Common myeloid progenitor, CD34-positive (primary cell): ENCODE measurements at regions of chr12 and their contacts with region 1.

Region 1: GRCh38 chr12:53065975-53066931 is 12.9 kb downstream of the SPRYD3 start:
- DNase-seq: peak; percentile 52 to 60 (median 53)
- H3K4me3 ChIP-seq: no peak overlapping the region
- H3K27ac ChIP-seq: no peak overlapping the region
- H3K4me1 ChIP-seq: peaks cover 0 to 9% (median 0%) of the 10 kb centered on the region in 4 experiments
- H3K27me3 ChIP-seq: no peaks in the 10 kb centered on the region

Region 2: GRCh38 chr12:53054112-53054833 is 12.0 kb before region 1 on chr12:
- CTCF ChIA-PET with region 1: interaction called, 44 read pairs
- POLR2A ChIA-PET with region 1: no interaction called
- DNase-seq: peak; percentile 91 to 95 (median 94)
- H3K4me3 ChIP-seq: peak overlapping the region; percentile 72 to 93 (median 79)
- H3K27ac ChIP-seq: peak overlapping the region in 1 of 2 experiments; percentile 25
- H3K4me1 ChIP-seq: peaks cover 0 to 18% (median 10%) of the 10 kb centered on the region in 4 experiments
- H3K27me3 ChIP-seq: no peaks in the 10 kb centered on the region

Region 3: GRCh38 chr12:53086361-53086760 is 20.1 kb after region 1 on chr12:
- CTCF ChIA-PET with region 1: interaction called, 361 read pairs
- POLR2A ChIA-PET with region 1: interaction called, 4 read pairs
- DNase-seq: no peak
- H3K4me3 ChIP-seq: no peak overlapping the region
- H3K27ac ChIP-seq: no peak overlapping the region
- H3K4me1 ChIP-seq: no peaks in the 10 kb centered on the region
- H3K27me3 ChIP-seq: no peaks in the 10 kb centered on the region

Region 4: GRCh38 chr12:53159195-53159839 is 93.1 kb after region 1 on chr12:
- CTCF ChIA-PET with region 1: interaction called, 20 read pairs
- POLR2A ChIA-PET with region 1: no interaction called
- DNase-seq: peak; percentile 81 to 90 (median 85)
- H3K4me3 ChIP-seq: no peak overlapping the region
- H3K27ac ChIP-seq: no peak overlapping the region
- H3K4me1 ChIP-seq: peaks cover 0 to 8% (median 2%) of the 10 kb centered on the region in 4 experiments
- H3K27me3 ChIP-seq: no peaks in the 10 kb centered on the region

Region 5: GRCh38 chr12:53200458-53201176 is 134.4 kb after region 1 on chr12:
- CTCF ChIA-PET with region 1: interaction called, 20 read pairs
- POLR2A ChIA-PET with region 1: no interaction called
- DNase-seq: peak in 2 of 3 donors; percentile 40 to 57
- H3K4me3 ChIP-seq: no peak overlapping the region
- H3K27ac ChIP-seq: peak overlapping the region in 1 of 2 experiments; percentile 49
- H3K4me1 ChIP-seq: peaks cover 9 to 47% (median 39%) of the 10 kb centered on the region in 4 experiments
- H3K27me3 ChIP-seq: no peaks in the 10 kb centered on the region

Region 6: GRCh38 chr12:53365245-53365904 is 299.1 kb after region 1 on chr12:
- CTCF ChIA-PET with region 1: no interaction called
- POLR2A ChIA-PET with region 1: no interaction called
- DNase-seq: peak in 2 of 3 donors; percentile 35 to 53
- H3K4me3 ChIP-seq: no peak overlapping the region
- H3K27ac ChIP-seq: peak overlapping the region in 1 of 2 experiments; percentile 75
- H3K4me1 ChIP-seq: peaks cover 5 to 30% (median 26%) of the 10 kb centered on the region in 4 experiments
- H3K27me3 ChIP-seq: no peaks in the 10 kb centered on the region